Ascending aorta (tissue), 2 donors: ENCODE measurements at regions of chr9 and their contacts with region 1.

Region 1: GRCh38 chr9:87119328-87119881 is 172.1 kb upstream of the GAS1 start:
- DNase-seq: peak in 1 of 2 donors; percentile 76
- H3K4me3 ChIP-seq: no peak overlapping the region
- H3K27ac ChIP-seq: peak overlapping the region; percentile 2 to 53
- H3K4me1 ChIP-seq: peaks cover 3 to 30% of the 10 kb centered on the region in 2 donors
- H3K27me3 ChIP-seq: no peaks in the 10 kb centered on the region
- CTCF ChIP-seq: no peak

Region 2: GRCh38 chr9:87039809-87040392 is 79.5 kb before region 1 on chr9:
- intact Hi-C with region 1: loop called (anchors 5 kb)
- DNase-seq: no peak
- H3K4me3 ChIP-seq: no peak overlapping the region
- H3K27ac ChIP-seq: no peak overlapping the region
- H3K4me1 ChIP-seq: peaks cover 0 to 4% of the 10 kb centered on the region in 2 donors
- H3K27me3 ChIP-seq: no peaks in the 10 kb centered on the region
- CTCF ChIP-seq: no peak

Region 3: GRCh38 chr9:87069690-87070089 is 49.7 kb before region 1 on chr9:
- intact Hi-C with region 1: no loop called
- DNase-seq: no peak
- H3K4me3 ChIP-seq: no peak overlapping the region
- H3K27ac ChIP-seq: no peak overlapping the region
- H3K4me1 ChIP-seq: peaks cover 0 to 2% of the 10 kb centered on the region in 2 donors
- H3K27me3 ChIP-seq: no peaks in the 10 kb centered on the region
- CTCF ChIP-seq: no peak

Region 4: GRCh38 chr9:87157366-87158031 is 38.1 kb after region 1 on chr9:
- intact Hi-C with region 1: no loop called
- DNase-seq: peak in 1 of 2 donors; percentile 71
- H3K4me3 ChIP-seq: no peak overlapping the region
- H3K27ac ChIP-seq: peak overlapping the region; percentile 41 to 60
- H3K4me1 ChIP-seq: peaks cover 3 to 7% of the 10 kb centered on the region in 2 donors
- H3K27me3 ChIP-seq: no peaks in the 10 kb centered on the region
- CTCF ChIP-seq: no peak

Region 5: GRCh38 chr9:87635656-87636501 is 516.5 kb after region 1 on chr9:
- intact Hi-C with region 1: no loop called
- DNase-seq: no peak
- H3K4me3 ChIP-seq: no peak overlapping the region
- H3K27ac ChIP-seq: no peak overlapping the region
- H3K4me1 ChIP-seq: no peaks in the 10 kb centered on the region
- H3K27me3 ChIP-seq: no peaks in the 10 kb centered on the region
- CTCF ChIP-seq: no peak